Right lobe of liver (tissue), 6 donors: ENCODE measurements at regions of chr5 and their contacts with region 1.

Region 1: DNA sequence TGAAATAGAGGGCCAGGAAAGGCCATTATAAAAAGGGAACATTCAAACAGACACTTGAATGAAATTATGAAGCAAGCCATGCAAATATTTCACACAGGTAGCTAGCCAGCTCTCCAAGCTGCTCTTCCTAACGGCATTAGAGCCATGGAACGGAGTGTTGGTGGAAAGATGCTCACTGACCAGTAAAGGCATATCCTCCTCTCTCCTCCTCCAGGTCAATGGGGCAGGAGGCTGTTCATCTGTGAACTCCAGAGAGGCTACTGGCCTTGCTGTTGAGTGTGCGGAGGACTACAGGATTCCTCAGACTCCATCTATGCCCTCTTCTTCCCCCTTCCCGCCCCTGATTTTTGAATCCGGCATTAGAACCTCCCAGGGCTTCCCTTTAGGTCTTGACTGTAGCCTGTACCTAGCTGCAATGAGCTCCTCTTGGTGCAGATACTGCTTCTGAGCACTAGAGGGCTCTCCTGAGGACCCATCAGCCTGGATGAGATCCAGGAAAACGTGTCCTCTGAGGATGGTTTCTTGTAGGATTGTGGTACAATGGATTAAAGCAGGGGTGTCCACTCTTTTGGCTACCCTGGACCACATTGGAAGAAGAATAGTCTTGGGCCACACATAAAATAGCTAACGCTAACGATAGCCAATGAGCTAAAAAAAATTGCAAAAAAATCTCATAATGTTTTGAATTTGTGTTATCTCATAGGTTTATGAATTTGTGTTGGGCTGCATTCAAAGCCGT is 162.2 kb downstream of the SREK1 start:
- DNase-seq: peak in 1 of 3 donors; percentile 63
- ATAC-seq: peak; percentile 95 to 97 (median 96)
- H3K4me3 ChIP-seq: no peak overlapping the region
- H3K27ac ChIP-seq: no peak overlapping the region
- H3K4me1 ChIP-seq: no peaks in the 10 kb centered on the region
- H3K27me3 ChIP-seq: no peaks in the 10 kb centered on the region
- CTCF ChIP-seq: peak; percentile 73 to 86 (median 76)
- POLR2A ChIP-seq: no peak

Region 2: DNA sequence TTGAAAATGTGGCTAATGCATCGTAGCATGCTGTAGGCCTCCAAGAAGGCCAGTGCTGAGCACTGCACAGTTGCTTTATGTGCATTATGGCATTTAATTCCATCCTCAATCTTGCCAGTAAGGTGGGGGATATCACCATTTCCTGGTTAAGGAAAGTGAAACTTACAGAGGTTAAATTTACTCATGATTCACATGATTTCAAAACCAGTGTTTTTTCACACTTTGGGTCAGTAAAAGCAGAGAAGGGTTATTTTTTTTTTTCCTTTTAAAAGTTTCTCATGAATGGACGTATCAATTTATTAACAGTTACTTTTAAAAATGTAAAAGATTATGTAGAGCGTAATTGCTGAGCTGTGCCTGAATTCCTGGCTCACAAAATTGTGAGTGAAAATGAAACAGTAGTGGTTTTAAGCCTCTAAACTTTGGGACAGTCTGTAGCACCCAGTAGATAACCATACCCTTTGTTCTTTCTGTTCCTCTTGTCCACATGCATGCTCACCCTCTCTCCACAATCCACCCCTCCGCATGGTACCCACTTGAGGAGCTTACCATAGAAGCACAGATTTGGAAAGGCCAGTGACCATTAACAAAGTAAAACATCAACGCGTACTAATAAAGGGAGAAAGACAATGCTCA is 311.1 kb after region 1 on chr5:
- intact Hi-C with region 1: no loop called
- DNase-seq: no peak
- ATAC-seq: peak in 1 of 4 donors; percentile 40
- H3K4me3 ChIP-seq: no peak overlapping the region
- H3K27ac ChIP-seq: no peak overlapping the region
- H3K4me1 ChIP-seq: no peaks in the 10 kb centered on the region
- H3K27me3 ChIP-seq: no peaks in the 10 kb centered on the region
- CTCF ChIP-seq: no peak
- POLR2A ChIP-seq: no peak

Region 3: DNA sequence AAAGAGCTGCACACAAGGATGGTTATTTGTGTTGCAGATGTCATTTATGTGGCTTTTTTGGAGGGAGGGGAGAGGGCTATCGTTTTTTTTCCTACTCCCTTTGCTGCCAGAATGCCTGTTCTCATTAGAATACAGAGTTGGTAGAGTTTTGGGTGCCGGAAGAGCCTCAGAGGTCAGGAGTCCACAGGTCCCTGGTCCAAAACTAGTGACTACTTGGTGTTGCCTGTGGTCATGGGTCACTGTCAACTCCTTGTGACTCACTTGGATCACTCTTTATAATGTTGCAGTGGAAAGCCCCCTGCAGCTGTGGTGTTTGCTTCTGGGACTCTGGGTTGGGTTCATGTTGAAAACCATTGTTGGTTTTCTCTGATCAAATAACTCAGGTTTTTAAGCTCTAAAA is 421.4 kb after region 1 on chr5:
- intact Hi-C with region 1: no loop called
- DNase-seq: no peak
- ATAC-seq: peak in 3 of 4 donors; percentile 30 to 65 (median 52)
- H3K4me3 ChIP-seq: no peak overlapping the region
- H3K27ac ChIP-seq: no peak overlapping the region
- H3K4me1 ChIP-seq: no peaks in the 10 kb centered on the region
- H3K27me3 ChIP-seq: no peaks in the 10 kb centered on the region
- CTCF ChIP-seq: no peak
- POLR2A ChIP-seq: no peak

Region 4: GRCh38 chr5:66757188-66757833 is 451.0 kb after region 1 on chr5:
- intact Hi-C with region 1: loop called in 1 of 2 experiments (anchors 5 kb)
- DNase-seq: peak in 1 of 3 donors; percentile 31
- ATAC-seq: peak; percentile 66 to 75 (median 67)
- H3K4me3 ChIP-seq: no peak overlapping the region
- H3K27ac ChIP-seq: no peak overlapping the region
- H3K4me1 ChIP-seq: no peaks in the 10 kb centered on the region
- H3K27me3 ChIP-seq: no peaks in the 10 kb centered on the region
- CTCF ChIP-seq: peak; percentile 51 to 58 (median 56)
- POLR2A ChIP-seq: no peak